Ascending aorta (tissue), 2 donors: ENCODE measurements at regions of chr20 and their contacts with region 1.

Region 1: GRCh38 chr20:32652739-32653526 is 20.8 kb downstream of the C20orf203 start:
- DNase-seq: peak; percentile 21 to 87
- H3K4me3 ChIP-seq: no peak overlapping the region
- H3K27ac ChIP-seq: no peak overlapping the region
- H3K4me1 ChIP-seq: no peaks in the 10 kb centered on the region
- H3K27me3 ChIP-seq: no peaks in the 10 kb centered on the region
- CTCF ChIP-seq: peak; percentile 92 to 96 (median 93)

Region 2: DNA sequence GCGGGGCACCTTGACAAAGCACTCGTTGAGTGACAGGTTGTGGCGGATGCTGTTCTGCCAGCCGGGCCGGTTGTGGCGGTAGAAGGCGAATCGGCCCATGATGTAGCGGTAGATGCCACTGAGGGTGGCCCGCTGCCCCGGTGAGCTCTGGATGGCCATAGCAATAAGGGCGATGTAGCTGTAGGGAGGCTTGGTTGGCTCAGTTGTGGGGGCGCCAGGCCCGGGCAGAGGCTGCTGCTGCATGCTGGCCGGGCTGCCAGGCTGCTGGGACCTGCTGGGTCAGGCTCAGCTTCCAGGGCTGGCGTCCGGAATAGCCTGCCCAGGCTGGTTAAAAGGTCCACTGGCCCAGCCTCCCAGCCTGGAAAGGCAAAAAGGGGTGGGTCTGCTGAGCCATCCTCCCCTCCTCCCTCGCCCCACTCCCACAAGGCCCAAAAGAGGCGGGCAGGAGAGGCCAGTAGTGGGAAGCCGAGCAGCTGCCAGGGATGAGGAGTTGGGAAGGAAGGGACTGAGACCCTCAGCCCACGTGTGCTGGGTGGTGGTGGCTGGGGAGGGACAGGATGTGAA is 807.6 kb before region 1 on chr20 and contains the start of gene FOXS1:
- intact Hi-C with region 1: no loop called
- DNase-seq: peak; percentile 60 to 91
- H3K4me3 ChIP-seq: peak within 1 kb of the TSS; percentile 52 to 70
- H3K27ac ChIP-seq: peak within 1 kb of the TSS; percentile 94 to 95
- H3K4me1 ChIP-seq: peaks cover 36 to 40% of the 10 kb centered on the region in 2 donors
- H3K27me3 ChIP-seq: no peaks in the 10 kb centered on the region
- CTCF ChIP-seq: no peak
- total RNA-seq, gene FOXS1: 21.8 TPM

Region 3: GRCh38 chr20:32336918-32337347 is 316.0 kb before region 1 on chr20:
- intact Hi-C with region 1: loop called (anchors 5 kb)
- DNase-seq: no peak
- H3K4me3 ChIP-seq: no peak overlapping the region
- H3K27ac ChIP-seq: no peak overlapping the region
- H3K4me1 ChIP-seq: peaks cover 0 to 3% of the 10 kb centered on the region in 2 donors
- H3K27me3 ChIP-seq: no peaks in the 10 kb centered on the region
- CTCF ChIP-seq: peak; percentile 23 to 49 (median 24)

Region 4: GRCh38 chr20:32497589-32498224 is 155.2 kb before region 1 on chr20:
- intact Hi-C with region 1: no loop called
- DNase-seq: no peak
- H3K4me3 ChIP-seq: no peak overlapping the region
- H3K27ac ChIP-seq: peak overlapping the region in 1 of 2 donors; percentile 29
- H3K4me1 ChIP-seq: no peaks in the 10 kb centered on the region
- H3K27me3 ChIP-seq: no peaks in the 10 kb centered on the region
- CTCF ChIP-seq: no peak

Region 5: GRCh38 chr20:32521780-32522525 is 131.0 kb before region 1 on chr20:
- intact Hi-C with region 1: loop called (anchors 1 kb)
- DNase-seq: no peak
- H3K4me3 ChIP-seq: no peak overlapping the region
- H3K27ac ChIP-seq: no peak overlapping the region
- H3K4me1 ChIP-seq: no peaks in the 10 kb centered on the region
- H3K27me3 ChIP-seq: no peaks in the 10 kb centered on the region
- CTCF ChIP-seq: peak; percentile 67 to 81 (median 81)